ENCODE measurements at regions of chr11 and their contacts with region 1.

Region 1: DNA sequence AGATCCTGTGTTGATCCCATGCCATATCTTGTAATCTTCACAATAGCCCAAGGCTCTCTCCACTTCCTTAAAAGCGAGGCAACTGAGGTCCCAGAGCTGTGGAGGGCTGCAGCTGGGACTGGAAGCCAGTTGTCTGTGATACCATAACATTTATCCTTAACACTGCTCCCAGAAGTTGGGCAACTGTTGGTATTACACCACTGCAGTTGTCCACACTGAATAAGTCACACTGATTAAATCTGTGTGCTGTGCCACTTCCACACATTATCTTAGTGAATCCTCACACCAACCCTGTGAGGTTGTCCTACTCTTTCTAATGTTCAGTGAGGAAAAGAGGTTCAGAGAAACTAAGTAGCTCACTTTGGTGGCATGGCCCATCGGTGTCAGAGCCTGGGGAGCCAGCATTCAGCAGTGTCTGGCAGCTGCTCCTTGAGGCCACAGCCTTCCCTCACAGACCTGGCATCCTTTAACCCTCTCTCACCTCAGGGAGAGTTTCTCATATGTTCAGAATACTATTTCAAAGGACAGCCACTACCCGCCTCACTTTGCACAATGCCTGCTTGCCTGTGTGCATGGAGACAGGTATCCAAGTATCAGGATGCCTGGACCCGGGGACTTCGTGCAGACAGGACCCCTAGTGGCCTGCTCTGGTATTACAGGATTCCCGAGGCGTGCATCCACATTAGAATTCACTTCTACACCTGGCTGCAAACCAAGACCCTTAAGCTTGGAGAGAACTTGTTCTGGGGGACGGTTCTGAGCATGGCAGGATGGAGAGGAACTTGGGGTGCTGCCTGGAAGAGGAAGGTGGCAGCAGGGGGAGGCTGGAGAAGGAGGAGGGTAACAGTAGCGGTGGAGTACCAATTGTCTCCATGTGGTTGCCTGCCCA is 221.9 kb upstream of the TBCEL start:
- DNase-seq: peak; percentile 45
- ATAC-seq: peak; percentile 85
- H3K4me3 ChIP-seq: no peak overlapping the region
- H3K27ac ChIP-seq: no peak overlapping the region
- H3K4me1 ChIP-seq: peaks cover 14% of the 10 kb centered on the region
- H3K27me3 ChIP-seq: no peaks in the 10 kb centered on the region
- CTCF ChIP-seq: peak; percentile 98

Region 2: GRCh38 chr11:120335908-120336640 is 466.0 kb before region 1 on chr11 and contains the start of gene ARHGEF12:
- CTCF ChIA-PET with region 1: no interaction called
- POLR2A ChIA-PET with region 1: no interaction called
- in situ Hi-C with region 1: no loop called
- intact Hi-C with region 1: no loop called
- DNase-seq: no peak
- ATAC-seq: peak; percentile 77
- H3K4me3 ChIP-seq: peak within 1 kb of the TSS; percentile 85 to 96
- H3K27ac ChIP-seq: peak within 1 kb of the TSS; percentile 98
- H3K4me1 ChIP-seq: peaks cover 53% of the 10 kb centered on the region
- H3K27me3 ChIP-seq: no peaks in the 10 kb centered on the region
- CTCF ChIP-seq: peak; percentile 92
- total RNA-seq, gene ARHGEF12: 182 TPM

Region 3: GRCh38 chr11:120517390-120517761 is 284.7 kb before region 1 on chr11:
- CTCF ChIA-PET with region 1: no interaction called
- POLR2A ChIA-PET with region 1: no interaction called
- in situ Hi-C with region 1: no loop called
- intact Hi-C with region 1: loop called (anchors 5 kb)
- DNase-seq: no peak
- ATAC-seq: no peak
- H3K4me3 ChIP-seq: no peak overlapping the region
- H3K27ac ChIP-seq: no peak overlapping the region
- H3K4me1 ChIP-seq: no peaks in the 10 kb centered on the region; the same call in 1 of the 2 replicates
- H3K27me3 ChIP-seq: no peaks in the 10 kb centered on the region; the same call in 1 of the 2 replicates
- CTCF ChIP-seq: no peak

Region 4: GRCh38 chr11:120682866-120683265 is 119.2 kb before region 1 on chr11:
- CTCF ChIA-PET with region 1: interaction called, 4 read pairs
- POLR2A ChIA-PET with region 1: no interaction called
- in situ Hi-C with region 1: no loop called
- intact Hi-C with region 1: loop called (anchors 10 kb)
- DNase-seq: no peak
- ATAC-seq: no peak
- H3K4me3 ChIP-seq: no peak overlapping the region
- H3K27ac ChIP-seq: no peak overlapping the region
- H3K4me1 ChIP-seq: no peaks in the 10 kb centered on the region
- H3K27me3 ChIP-seq: peaks cover 25% of the 10 kb centered on the region
- CTCF ChIP-seq: no peak

Region 5: GRCh38 chr11:120869516-120870011 is 67.5 kb after region 1 on chr11:
- CTCF ChIA-PET with region 1: no interaction called
- POLR2A ChIA-PET with region 1: no interaction called
- in situ Hi-C with region 1: no loop called
- intact Hi-C with region 1: no loop called
- DNase-seq: no peak
- ATAC-seq: no peak
- H3K4me3 ChIP-seq: no peak overlapping the region
- H3K27ac ChIP-seq: no peak overlapping the region
- H3K4me1 ChIP-seq: no peaks in the 10 kb centered on the region
- H3K27me3 ChIP-seq: peaks cover 13% of the 10 kb centered on the region; the same call in 1 of the 2 replicates
- CTCF ChIP-seq: no peak

Region 6: GRCh38 chr11:120918257-120918656 is 116.2 kb after region 1 on chr11:
- CTCF ChIA-PET with region 1: no interaction called
- POLR2A ChIA-PET with region 1: no interaction called
- in situ Hi-C with region 1: no loop called
- intact Hi-C with region 1: no loop called
- DNase-seq: no peak
- ATAC-seq: no peak
- H3K4me3 ChIP-seq: no peak overlapping the region
- H3K27ac ChIP-seq: no peak overlapping the region
- H3K4me1 ChIP-seq: no peaks in the 10 kb centered on the region
- H3K27me3 ChIP-seq: peaks cover 12% of the 10 kb centered on the region; the same call in 1 of the 2 replicates
- CTCF ChIP-seq: no peak